ENCODE measurements at regions of chr2 and their contacts with region 1.

Region 1: DNA sequence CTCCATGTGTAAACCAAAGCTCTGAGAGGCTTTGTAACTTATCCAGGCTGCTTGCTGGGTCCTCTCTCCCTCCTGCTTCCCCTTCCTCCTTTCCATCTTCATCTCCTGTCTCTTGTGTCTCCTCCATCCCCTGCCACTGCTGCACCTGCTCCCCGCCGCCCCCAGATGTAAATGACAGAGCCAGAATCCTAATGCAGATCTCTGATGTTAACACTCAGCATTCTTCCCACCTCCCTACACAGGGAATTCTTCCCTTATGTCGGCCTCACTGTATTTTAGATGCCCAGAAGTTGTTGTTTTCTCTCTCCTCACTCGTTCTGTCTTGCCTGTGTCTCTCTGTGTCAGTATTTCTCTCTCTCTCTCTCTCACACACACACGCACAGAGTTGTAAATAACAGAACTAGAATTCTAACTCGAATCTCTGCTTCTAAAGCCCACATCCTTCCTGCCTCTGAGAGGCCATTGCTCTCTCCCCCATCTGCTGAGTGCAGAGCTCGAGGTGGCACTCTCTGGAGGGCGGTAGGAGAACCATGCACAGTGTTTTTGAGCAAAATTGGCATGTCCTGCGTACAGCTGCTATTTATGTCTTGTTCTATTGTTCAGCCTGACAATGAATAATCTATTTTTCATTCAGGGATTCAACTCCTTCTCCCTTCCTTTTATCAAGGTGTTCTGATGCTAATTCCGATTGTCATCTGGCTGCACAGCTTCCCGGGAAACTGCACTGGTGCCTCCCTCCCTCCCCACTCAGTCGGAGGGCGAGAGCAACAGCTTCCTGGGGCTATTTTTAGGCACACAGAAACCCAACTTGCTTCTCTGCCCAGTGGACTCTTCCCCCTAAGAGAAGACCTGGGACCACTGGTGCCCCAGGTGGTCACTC is 219.9 kb downstream of the SH3RF3 start:
- DNase-seq: peak; percentile 56 to 74 (median 66)
- H3K4me3 ChIP-seq: peak overlapping the region in 1 of 2 donors; percentile 32
- H3K4me3 Mint-ChIP-seq: peak overlapping the region; percentile 41 to 77 (median 66)
- H3K27ac ChIP-seq: peak overlapping the region; percentile 2
- H3K27ac Mint-ChIP-seq: peak overlapping the region; percentile 22 to 89 (median 83)
- H3K4me1 ChIP-seq: peaks cover 44% of the 10 kb centered on the region
- H3K4me1 Mint-ChIP-seq: peaks cover 17 to 48% (median 34%) of the 10 kb centered on the region in 4 donors
- H3K27me3 ChIP-seq: no peaks in the 10 kb centered on the region
- H3K27me3 Mint-ChIP-seq: no peaks in the 10 kb centered on the region

Region 2: DNA sequence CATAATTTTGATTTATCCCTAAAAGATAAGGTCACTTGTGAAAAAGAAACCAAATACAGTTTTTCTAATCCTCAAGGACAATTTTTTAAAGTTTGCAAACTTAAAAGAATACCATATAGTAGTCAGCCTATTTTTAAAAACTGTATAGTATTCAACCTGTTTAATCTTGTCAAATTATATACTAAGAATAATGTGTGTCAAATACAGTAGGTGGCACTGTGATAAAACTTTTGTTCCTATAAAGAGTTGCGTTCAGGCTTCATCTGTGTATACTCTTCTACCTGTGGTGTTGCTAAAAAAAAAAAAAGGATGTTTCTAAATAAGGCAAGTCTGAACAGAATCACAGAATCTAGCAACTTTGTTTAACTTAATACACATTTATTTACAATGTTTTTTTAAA is 493.7 kb before region 1 on chr2:
- CTCF ChIA-PET with region 1: no interaction called
- POLR2A ChIA-PET with region 1: no interaction called
- intact Hi-C with region 1: loop called (anchors 1 kb)
- DNase-seq: peak in 4 of 5 donors; percentile 26 to 38 (median 34)
- H3K4me3 ChIP-seq: no peak overlapping the region
- H3K4me3 Mint-ChIP-seq: no peak overlapping the region
- H3K27ac ChIP-seq: no peak overlapping the region
- H3K27ac Mint-ChIP-seq: peak overlapping the region in 1 of 7 donors; percentile 13
- H3K4me1 ChIP-seq: no peaks in the 10 kb centered on the region
- H3K4me1 Mint-ChIP-seq: peaks cover 0 to 2% (median 0%) of the 10 kb centered on the region in 4 donors
- H3K27me3 ChIP-seq: no peaks in the 10 kb centered on the region
- H3K27me3 Mint-ChIP-seq: no peaks in the 10 kb centered on the region

Region 3: GRCh38 chr2:108927936-108928659 is 420.8 kb before region 1 on chr2:
- CTCF ChIA-PET with region 1: interaction called, 4 read pairs
- POLR2A ChIA-PET with region 1: no interaction called
- intact Hi-C with region 1: loop called (anchors 5 kb)
- DNase-seq: peak in 4 of 5 donors; percentile 41 to 52 (median 46)
- H3K4me3 ChIP-seq: no peak overlapping the region
- H3K4me3 Mint-ChIP-seq: no peak overlapping the region
- H3K27ac ChIP-seq: no peak overlapping the region
- H3K27ac Mint-ChIP-seq: peak overlapping the region in 1 of 7 donors; percentile 2
- H3K4me1 ChIP-seq: peaks cover 7% of the 10 kb centered on the region
- H3K4me1 Mint-ChIP-seq: peaks cover 4 to 14% (median 7%) of the 10 kb centered on the region in 4 donors
- H3K27me3 ChIP-seq: no peaks in the 10 kb centered on the region
- H3K27me3 Mint-ChIP-seq: no peaks in the 10 kb centered on the region

Region 4: GRCh38 chr2:109128048-109128465 is 220.9 kb before region 1 on chr2:
- CTCF ChIA-PET with region 1: interaction called, 7 read pairs
- POLR2A ChIA-PET with region 1: no interaction called
- intact Hi-C with region 1: loop called (anchors 1 kb)
- DNase-seq: peak; percentile 32 to 56 (median 54)
- H3K4me3 ChIP-seq: peak overlapping the region; percentile 11 to 63
- H3K4me3 Mint-ChIP-seq: peak overlapping the region; percentile 71 to 85 (median 80)
- H3K27ac ChIP-seq: no peak overlapping the region
- H3K27ac Mint-ChIP-seq: peak overlapping the region in 1 of 7 donors; percentile 12
- H3K4me1 ChIP-seq: peaks cover 15% of the 10 kb centered on the region
- H3K4me1 Mint-ChIP-seq: peaks cover 6 to 14% (median 10%) of the 10 kb centered on the region in 4 donors
- H3K27me3 ChIP-seq: peaks cover 5% of the 10 kb centered on the region
- H3K27me3 Mint-ChIP-seq: peaks cover 20 to 39% of the 10 kb centered on the region in 2 donors

Region 5: DNA sequence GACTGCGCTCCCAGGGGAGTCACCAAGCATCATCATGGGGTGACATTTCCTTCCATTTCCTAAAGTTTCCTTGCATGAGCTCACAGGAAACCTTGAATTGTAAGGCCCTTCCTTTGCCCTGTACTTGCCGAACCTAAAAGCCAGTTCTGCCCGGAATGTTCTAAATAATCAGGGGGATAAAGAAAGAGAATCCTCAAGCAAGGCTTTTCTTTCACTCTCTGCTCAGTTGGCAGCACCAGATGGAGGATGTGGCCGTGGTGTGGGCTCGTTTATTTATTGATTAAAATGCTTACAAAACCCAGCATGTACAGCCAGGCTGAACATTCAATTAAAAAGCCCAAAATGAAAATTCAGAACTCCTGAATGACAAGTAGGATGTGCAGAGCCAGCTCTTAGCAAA is 49.4 kb before region 1 on chr2:
- CTCF ChIA-PET with region 1: no interaction called
- POLR2A ChIA-PET with region 1: no interaction called
- intact Hi-C with region 1: loop called (anchors 5 kb)
- DNase-seq: no peak
- H3K4me3 ChIP-seq: no peak overlapping the region
- H3K4me3 Mint-ChIP-seq: no peak overlapping the region
- H3K27ac ChIP-seq: no peak overlapping the region
- H3K27ac Mint-ChIP-seq: no peak overlapping the region
- H3K4me1 ChIP-seq: no peaks in the 10 kb centered on the region
- H3K4me1 Mint-ChIP-seq: no peaks in the 10 kb centered on the region
- H3K27me3 ChIP-seq: no peaks in the 10 kb centered on the region
- H3K27me3 Mint-ChIP-seq: peaks cover 0 to 2% of the 10 kb centered on the region in 2 donors

Region 6: GRCh38 chr2:109331896-109332848 is 16.7 kb before region 1 on chr2:
- CTCF ChIA-PET with region 1: interaction called, 3 read pairs
- POLR2A ChIA-PET with region 1: interaction called, 14 read pairs
- intact Hi-C with region 1: loop called (anchors 2 kb)
- DNase-seq: peak in 2 of 5 donors; percentile 16
- H3K4me3 ChIP-seq: peak overlapping the region in 1 of 2 donors; percentile 22
- H3K4me3 Mint-ChIP-seq: peak overlapping the region; percentile 72 to 90 (median 77)
- H3K27ac ChIP-seq: no peak overlapping the region
- H3K27ac Mint-ChIP-seq: peak overlapping the region in 3 of 7 donors; percentile 26 to 85 (median 67)
- H3K4me1 ChIP-seq: peaks cover 33% of the 10 kb centered on the region
- H3K4me1 Mint-ChIP-seq: peaks cover 12 to 31% (median 22%) of the 10 kb centered on the region in 4 donors
- H3K27me3 ChIP-seq: no peaks in the 10 kb centered on the region
- H3K27me3 Mint-ChIP-seq: peaks cover 3 to 8% of the 10 kb centered on the region in 2 donors